Activated CD8-positive, alpha-beta T cell treated with anti-CD3 and anti-CD28 coated beads for 36 hours (primary cell): ENCODE measurements at regions of chr15 and their contacts with region 1.

Region 1: GRCh38 chr15:89874926-89875564 is 18.7 kb downstream of the AP3S2 start:
- DNase-seq: peak; percentile 92
- ATAC-seq: peak; percentile 100
- H3K4me3 Mint-ChIP-seq: no peak overlapping the region
- H3K27ac Mint-ChIP-seq: peak overlapping the region; percentile 59
- H3K4me1 Mint-ChIP-seq: peaks cover 5% of the 10 kb centered on the region
- H3K27me3 Mint-ChIP-seq: no peaks in the 10 kb centered on the region
- CTCF ChIP-seq: peak; percentile 94

Region 2: DNA sequence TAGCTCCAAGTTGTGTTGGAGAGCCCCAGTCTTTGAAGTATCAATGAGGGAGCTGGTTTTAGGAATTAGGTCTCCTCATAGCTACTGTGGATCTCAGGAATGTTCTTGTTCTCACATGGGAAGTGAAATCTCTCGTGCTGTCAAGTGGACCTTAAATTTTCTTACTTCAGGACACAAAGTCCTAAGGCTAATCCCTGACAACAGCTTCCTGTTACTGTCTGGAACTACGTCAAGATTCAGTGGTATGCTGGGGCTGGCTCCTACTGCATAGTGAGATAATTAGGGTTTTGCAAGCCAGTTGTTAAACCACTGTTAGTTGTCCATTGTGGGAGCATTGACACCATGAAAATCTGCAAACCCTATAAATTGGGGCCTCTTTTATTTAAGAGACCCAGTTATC is 146.8 kb before region 1 on chr15:
- CTCF ChIA-PET with region 1: interaction called, 11 read pairs
- POLR2A ChIA-PET with region 1: no interaction called
- intact Hi-C with region 1: no loop called
- DNase-seq: no peak
- ATAC-seq: no peak
- H3K4me3 Mint-ChIP-seq: no peak overlapping the region
- H3K27ac Mint-ChIP-seq: no peak overlapping the region
- H3K4me1 Mint-ChIP-seq: no peaks in the 10 kb centered on the region
- H3K27me3 Mint-ChIP-seq: no peaks in the 10 kb centered on the region
- CTCF ChIP-seq: no peak

Region 3: GRCh38 chr15:89750560-89751542 is 124.2 kb before region 1 on chr15 and contains the start of gene MESP1:
- CTCF ChIA-PET with region 1: interaction called, 13 read pairs
- POLR2A ChIA-PET with region 1: no interaction called
- intact Hi-C with region 1: no loop called
- DNase-seq: peak; percentile 90
- ATAC-seq: peak; percentile 97
- H3K4me3 Mint-ChIP-seq: peak within 1 kb of the TSS; percentile 74
- H3K27ac Mint-ChIP-seq: no peak within 1 kb of the TSS
- H3K4me1 Mint-ChIP-seq: peaks cover 2% of the 10 kb centered on the region
- H3K27me3 Mint-ChIP-seq: peaks cover 13% of the 10 kb centered on the region
- CTCF ChIP-seq: peak; percentile 84
- total RNA-seq, gene MESP1: 3.4 to 5.3 TPM

Region 4: DNA sequence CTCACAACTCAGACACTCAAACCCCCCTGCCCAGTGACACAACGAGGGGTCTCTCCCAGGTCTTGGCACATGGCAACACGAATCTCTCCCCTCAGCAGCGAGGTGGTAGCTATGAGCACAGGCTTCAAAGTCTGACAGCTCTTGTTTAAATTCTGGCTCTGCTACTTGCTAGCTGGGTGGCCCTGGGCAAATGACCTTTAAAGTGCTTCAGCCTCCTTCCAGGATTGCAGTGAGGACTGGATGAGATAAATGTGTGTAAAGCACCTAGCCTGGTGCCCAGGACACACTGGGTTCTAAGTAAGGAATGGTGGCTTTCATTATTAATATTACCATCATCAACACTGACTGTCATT is 37.2 kb before region 1 on chr15:
- CTCF ChIA-PET with region 1: interaction called, 13 read pairs
- POLR2A ChIA-PET with region 1: no interaction called
- intact Hi-C with region 1: no loop called
- DNase-seq: no peak
- ATAC-seq: no peak
- H3K4me3 Mint-ChIP-seq: no peak overlapping the region
- H3K27ac Mint-ChIP-seq: peak overlapping the region; percentile 10
- H3K4me1 Mint-ChIP-seq: peaks cover 6% of the 10 kb centered on the region
- H3K27me3 Mint-ChIP-seq: no peaks in the 10 kb centered on the region
- CTCF ChIP-seq: no peak

Region 5: DNA sequence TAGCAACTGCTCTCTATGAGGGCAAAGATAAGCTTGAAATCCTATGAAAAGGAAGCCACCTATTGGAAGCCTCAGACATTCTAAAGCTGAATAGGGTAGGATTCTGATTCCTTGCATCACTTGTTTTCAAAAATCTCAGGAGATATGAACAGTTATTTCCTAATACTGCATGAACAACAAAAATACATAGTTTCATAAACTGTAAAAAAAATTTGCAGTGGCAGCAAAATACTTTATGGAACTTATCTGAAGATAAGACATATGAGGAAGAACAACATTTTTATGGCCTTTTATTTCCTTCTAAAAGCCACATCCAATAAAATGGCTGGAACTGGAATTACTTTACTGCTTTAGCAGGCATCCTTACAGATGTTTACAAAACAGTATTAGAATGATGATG is 11.1 kb before region 1 on chr15:
- CTCF ChIA-PET with region 1: interaction called, 12 read pairs
- POLR2A ChIA-PET with region 1: interaction called, 3 read pairs
- intact Hi-C with region 1: no loop called
- DNase-seq: no peak
- ATAC-seq: no peak
- H3K4me3 Mint-ChIP-seq: no peak overlapping the region
- H3K27ac Mint-ChIP-seq: no peak overlapping the region
- H3K4me1 Mint-ChIP-seq: peaks cover 5% of the 10 kb centered on the region
- H3K27me3 Mint-ChIP-seq: no peaks in the 10 kb centered on the region
- CTCF ChIP-seq: no peak

Region 6: DNA sequence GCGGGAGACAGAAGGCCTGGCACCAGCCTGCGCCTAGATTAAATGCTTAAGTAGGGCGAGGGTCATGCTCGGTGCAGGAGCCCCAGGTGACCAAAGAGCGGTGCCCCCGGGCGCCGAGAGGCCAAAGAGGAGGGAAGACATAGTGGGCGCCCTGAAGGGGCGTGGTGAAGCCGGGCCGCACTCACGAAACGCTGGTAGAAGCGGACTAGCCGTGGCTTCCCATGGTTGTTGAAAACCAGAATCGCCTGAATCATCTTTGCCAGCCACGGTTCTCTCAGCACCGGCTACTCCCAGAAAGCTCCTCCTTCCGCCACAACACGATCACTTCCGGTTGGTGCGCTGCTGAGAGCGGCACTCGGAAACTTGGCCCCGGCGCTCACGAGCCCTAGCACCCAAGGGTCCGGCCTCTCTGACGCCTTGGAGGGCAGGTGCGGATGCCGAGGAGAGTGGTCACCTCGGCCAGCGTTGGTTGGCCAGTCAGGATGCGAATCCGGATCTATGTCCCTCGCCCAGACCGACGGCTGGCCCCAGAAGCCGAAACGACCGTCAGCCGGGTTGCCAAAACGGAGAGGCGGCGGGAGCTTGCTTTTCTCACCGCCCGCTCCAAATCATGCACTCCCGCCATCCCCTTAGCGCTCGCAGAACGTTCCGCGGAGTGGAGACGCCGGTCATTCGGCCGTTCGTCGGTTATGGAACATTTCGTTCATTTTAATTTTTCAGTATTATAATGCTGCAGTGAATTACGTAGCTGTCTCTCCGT is 18.8 kb after region 1 on chr15 and contains the start of gene AP3S2:
- CTCF ChIA-PET with region 1: interaction called, 61 read pairs
- POLR2A ChIA-PET with region 1: interaction called, 5 read pairs
- intact Hi-C with region 1: no loop called
- DNase-seq: peak; percentile 93
- ATAC-seq: peak; percentile 95
- H3K4me3 Mint-ChIP-seq: peak within 1 kb of the TSS; percentile 100
- H3K27ac Mint-ChIP-seq: peak within 1 kb of the TSS; percentile 99
- H3K4me1 Mint-ChIP-seq: peaks cover 28% of the 10 kb centered on the region
- H3K27me3 Mint-ChIP-seq: no peaks in the 10 kb centered on the region
- CTCF ChIP-seq: no peak
- total RNA-seq, gene AP3S2: 20.3 to 23.0 TPM